ENCODE measurements at regions of chr9 and their contacts with region 1.

Region 1: GRCh38 chr9:8757881-8758280 is 958.3 kb upstream of the DMAC1 start:
- DNase-seq: no peak
- H3K4me3 ChIP-seq: no peak overlapping the region
- H3K27ac ChIP-seq: no peak overlapping the region
- H3K4me1 ChIP-seq: peaks cover 0 to 2% (median 0%) of the 10 kb centered on the region in 4 donors
- H3K27me3 ChIP-seq: no peaks in the 10 kb centered on the region
- CTCF ChIP-seq: no peak
- EP300 ChIP-seq: no peak
- POLR2A ChIP-seq: no peak

Region 2: GRCh38 chr9:8736805-8737204 is 21.1 kb before region 1 on chr9:
- in situ Hi-C with region 1: no loop called
- intact Hi-C with region 1: loop called (anchors 1 kb)
- DNase-seq: no peak
- H3K4me3 ChIP-seq: no peak overlapping the region
- H3K27ac ChIP-seq: no peak overlapping the region
- H3K4me1 ChIP-seq: no peaks in the 10 kb centered on the region
- H3K27me3 ChIP-seq: no peaks in the 10 kb centered on the region
- CTCF ChIP-seq: no peak
- EP300 ChIP-seq: no peak
- POLR2A ChIP-seq: no peak

Region 3: GRCh38 chr9:8784838-8785237 is 27.0 kb after region 1 on chr9:
- in situ Hi-C with region 1: no loop called
- intact Hi-C with region 1: loop called (anchors 1 kb)
- DNase-seq: no peak
- H3K4me3 ChIP-seq: no peak overlapping the region
- H3K27ac ChIP-seq: no peak overlapping the region
- H3K4me1 ChIP-seq: no peaks in the 10 kb centered on the region
- H3K27me3 ChIP-seq: no peaks in the 10 kb centered on the region
- CTCF ChIP-seq: no peak
- EP300 ChIP-seq: no peak
- POLR2A ChIP-seq: no peak